Activated naive CD4-positive, alpha-beta T cell treated with anti-CD3 and anti-CD28 coated beads for 36 hours (primary cell): ENCODE measurements at regions of chr11 and their contacts with region 1.

Region 1: GRCh38 chr11:66336234-66337102 is at the start of gene RIN1:
- DNase-seq: peak; percentile 64
- H3K4me3 Mint-ChIP-seq: peak within 1 kb of the TSS; percentile 82
- H3K27ac Mint-ChIP-seq: peak within 1 kb of the TSS; percentile 63
- H3K4me1 Mint-ChIP-seq: peaks cover 20% of the 10 kb centered on the region
- H3K27me3 Mint-ChIP-seq: no peaks in the 10 kb centered on the region
- total RNA-seq, gene RIN1: 2.0 to 2.6 TPM

Region 2: GRCh38 chr11:66363805-66364535 is 27.5 kb after region 1 on chr11:
- CTCF ChIA-PET with region 1: interaction called, 14 read pairs
- intact Hi-C with region 1: no loop called
- DNase-seq: peak; percentile 85
- H3K4me3 Mint-ChIP-seq: no peak overlapping the region
- H3K27ac Mint-ChIP-seq: no peak overlapping the region
- H3K4me1 Mint-ChIP-seq: no peaks in the 10 kb centered on the region
- H3K27me3 Mint-ChIP-seq: no peaks in the 10 kb centered on the region

Region 3: DNA sequence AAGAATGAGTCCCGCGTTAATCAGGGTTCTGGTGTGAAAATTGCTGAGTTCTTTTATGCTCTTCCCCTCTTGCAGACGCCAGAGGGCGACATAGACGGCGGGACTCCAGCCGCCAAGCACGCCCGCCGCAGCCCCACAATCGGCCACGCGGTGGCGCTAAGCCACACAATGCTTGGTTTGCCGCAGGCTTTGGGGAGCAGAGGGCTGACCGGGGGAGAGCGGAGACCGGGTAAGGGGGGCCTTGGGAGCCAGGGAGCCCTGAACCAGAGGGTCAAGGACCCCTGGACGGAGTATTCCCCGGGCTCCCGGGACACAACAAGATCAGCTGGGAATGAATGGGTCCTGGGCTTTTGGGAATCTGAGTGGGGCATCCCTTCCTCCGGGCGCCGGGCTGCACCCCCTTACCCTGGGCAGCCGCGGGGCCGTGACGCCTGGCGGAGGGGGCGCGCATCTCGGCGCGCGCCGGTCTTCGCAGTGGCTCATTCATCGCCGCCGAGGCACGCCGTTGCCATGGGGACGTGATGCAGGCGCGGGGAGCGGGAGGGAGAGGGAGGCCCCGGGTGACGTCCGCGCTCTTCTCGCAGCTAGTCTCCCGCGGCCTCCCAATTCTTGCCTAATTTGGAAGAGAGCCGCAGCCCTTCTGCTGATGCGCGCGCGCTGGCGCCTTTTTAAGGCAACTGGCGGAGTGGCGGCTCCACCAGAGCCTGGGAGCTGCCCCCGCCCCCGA is 72.2 kb after region 1 on chr11:
- CTCF ChIA-PET with region 1: no interaction called
- intact Hi-C with region 1: no loop called
- DNase-seq: peak; percentile 93
- H3K4me3 Mint-ChIP-seq: peak overlapping the region; percentile 68
- H3K27ac Mint-ChIP-seq: no peak overlapping the region
- H3K4me1 Mint-ChIP-seq: peaks cover 4% of the 10 kb centered on the region
- H3K27me3 Mint-ChIP-seq: peaks cover 9% of the 10 kb centered on the region